Naive thymus-derived CD4-positive, alpha-beta T cell (primary cell): ENCODE measurements at regions of chr16 and their contacts with region 1.

Region 1: DNA sequence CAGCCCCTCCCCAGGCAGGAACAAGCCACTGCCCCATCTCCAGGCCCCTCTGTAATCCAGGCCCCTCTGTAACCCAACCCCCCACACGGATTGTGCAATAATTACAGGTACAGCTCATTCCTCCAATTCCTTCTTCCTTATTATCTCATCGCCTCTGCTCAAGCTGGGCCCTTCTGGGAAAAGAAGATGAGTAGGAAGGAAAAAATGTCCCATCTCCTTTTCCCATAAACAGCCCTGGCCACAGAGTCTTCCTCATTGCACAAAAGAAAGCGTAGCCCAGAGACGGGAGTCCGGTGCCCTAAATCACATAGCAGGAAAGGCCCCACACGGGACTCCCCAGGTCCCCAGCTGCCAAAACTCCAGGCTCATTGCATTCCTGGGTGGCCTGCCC is 3.6 kb upstream of the LITAFD start:
- DNase-seq: no peak
- ATAC-seq: no peak
- H3K4me3 ChIP-seq: no peak overlapping the region
- H3K4me3 Mint-ChIP-seq: no peak overlapping the region
- H3K27ac ChIP-seq: no peak overlapping the region
- H3K27ac Mint-ChIP-seq: no peak overlapping the region
- H3K4me1 ChIP-seq: no peaks in the 10 kb centered on the region
- H3K4me1 Mint-ChIP-seq: peaks cover 0 to 23% (median 11%) of the 10 kb centered on the region in 7 donors
- H3K27me3 ChIP-seq: no peaks in the 10 kb centered on the region
- H3K27me3 Mint-ChIP-seq: no peaks in the 10 kb centered on the region

Region 2: GRCh38 chr16:8589057-8589899 is 289.2 kb before region 1 on chr16:
- CTCF ChIA-PET with region 1: no interaction called
- POLR2A ChIA-PET with region 1: no interaction called
- intact Hi-C with region 1: no loop called
- DNase-seq: no peak
- ATAC-seq: no peak
- H3K4me3 ChIP-seq: no peak overlapping the region
- H3K4me3 Mint-ChIP-seq: peak overlapping the region in 3 of 10 donors; percentile 12 to 40 (median 19)
- H3K27ac ChIP-seq: no peak overlapping the region
- H3K27ac Mint-ChIP-seq: no peak overlapping the region
- H3K4me1 ChIP-seq: no peaks in the 10 kb centered on the region
- H3K4me1 Mint-ChIP-seq: peaks cover 0 to 7% (median 5%) of the 10 kb centered on the region in 7 donors
- H3K27me3 ChIP-seq: peaks cover 0 to 17% of the 10 kb centered on the region in 2 donors
- H3K27me3 Mint-ChIP-seq: peaks cover 34 to 49% (median 37%) of the 10 kb centered on the region in 5 donors

Region 3: DNA sequence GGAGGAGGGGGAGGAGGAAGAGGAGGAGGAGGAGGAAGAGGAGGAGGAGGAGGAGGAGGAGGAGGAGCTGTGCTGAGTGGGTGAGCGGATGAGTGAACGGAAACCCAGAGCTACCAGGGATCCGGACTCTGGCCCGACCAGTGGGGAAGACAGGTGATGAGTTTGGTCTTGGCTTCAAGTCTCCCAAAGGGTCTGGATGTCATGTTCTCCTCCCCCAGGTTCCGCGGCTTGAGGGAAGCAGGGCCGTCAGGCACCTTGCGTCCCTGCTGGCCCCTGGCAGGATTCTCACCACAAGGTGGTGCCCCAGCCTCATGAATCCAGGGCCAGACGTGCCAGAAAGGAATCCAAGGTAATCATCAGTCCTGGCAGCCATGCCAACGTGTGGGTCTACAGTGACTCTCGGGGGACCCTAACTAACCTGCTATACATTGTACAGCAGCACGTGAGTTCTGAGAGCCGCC is 217.6 kb before region 1 on chr16:
- CTCF ChIA-PET with region 1: interaction called, 16 read pairs
- POLR2A ChIA-PET with region 1: no interaction called
- intact Hi-C with region 1: loop called (anchors 1 kb)
- DNase-seq: peak in 8 of 9 donors; percentile 11 to 71 (median 28)
- ATAC-seq: peak; percentile 81
- H3K4me3 ChIP-seq: no peak overlapping the region
- H3K4me3 Mint-ChIP-seq: no peak overlapping the region
- H3K27ac ChIP-seq: no peak overlapping the region
- H3K27ac Mint-ChIP-seq: no peak overlapping the region
- H3K4me1 ChIP-seq: no peaks in the 10 kb centered on the region
- H3K4me1 Mint-ChIP-seq: peaks cover 0 to 3% (median 0%) of the 10 kb centered on the region in 7 donors
- H3K27me3 ChIP-seq: no peaks in the 10 kb centered on the region
- H3K27me3 Mint-ChIP-seq: no peaks in the 10 kb centered on the region

Region 4: DNA sequence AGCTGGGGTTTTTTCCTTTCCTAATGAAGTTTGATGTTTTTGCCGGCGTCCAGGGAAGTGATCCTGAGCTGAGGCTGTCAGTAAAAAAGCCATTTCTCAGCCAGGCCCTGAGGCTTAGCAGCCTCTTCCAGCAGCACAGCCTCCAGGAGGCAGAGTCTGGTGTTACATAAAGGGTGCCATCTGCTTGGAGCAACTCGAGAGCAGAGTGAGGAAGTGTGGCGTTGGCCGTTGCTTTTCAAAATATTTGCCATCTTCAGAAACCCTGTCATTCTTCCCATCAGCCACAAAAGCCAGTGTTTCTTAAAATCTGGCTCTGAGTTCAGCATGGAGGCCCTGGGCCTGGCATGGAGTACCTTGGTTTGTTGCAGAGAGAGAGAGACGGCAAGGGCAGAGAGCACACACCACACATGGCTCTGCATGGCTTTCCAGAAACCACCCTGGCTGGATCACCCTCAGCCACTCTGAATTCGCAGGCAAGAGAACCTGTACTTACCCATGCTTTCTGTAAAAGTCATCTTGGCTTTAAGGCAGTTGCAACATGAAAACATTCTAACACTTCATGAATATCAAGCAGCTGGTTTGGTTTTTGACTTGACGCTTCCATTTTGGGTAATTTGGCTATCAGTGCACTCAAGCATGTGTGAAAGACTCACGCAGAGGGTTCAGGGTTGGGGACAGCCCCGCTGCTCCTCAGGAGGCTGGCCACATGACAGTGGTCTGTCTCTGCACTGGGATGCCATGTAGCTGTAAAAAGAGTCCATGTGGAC is 59.8 kb before region 1 on chr16:
- CTCF ChIA-PET with region 1: interaction called, 3 read pairs
- POLR2A ChIA-PET with region 1: no interaction called
- intact Hi-C with region 1: loop called in 1 of 2 experiments (anchors 2 kb)
- DNase-seq: no peak
- ATAC-seq: no peak
- H3K4me3 ChIP-seq: no peak overlapping the region
- H3K4me3 Mint-ChIP-seq: peak overlapping the region in 1 of 10 donors; percentile 32
- H3K27ac ChIP-seq: no peak overlapping the region
- H3K27ac Mint-ChIP-seq: peak overlapping the region in 2 of 9 donors; percentile 53 to 81
- H3K4me1 ChIP-seq: peaks cover 0 to 5% of the 10 kb centered on the region in 2 donors
- H3K4me1 Mint-ChIP-seq: peaks cover 16 to 29% (median 23%) of the 10 kb centered on the region in 7 donors
- H3K27me3 ChIP-seq: no peaks in the 10 kb centered on the region
- H3K27me3 Mint-ChIP-seq: no peaks in the 10 kb centered on the region

Region 5: DNA sequence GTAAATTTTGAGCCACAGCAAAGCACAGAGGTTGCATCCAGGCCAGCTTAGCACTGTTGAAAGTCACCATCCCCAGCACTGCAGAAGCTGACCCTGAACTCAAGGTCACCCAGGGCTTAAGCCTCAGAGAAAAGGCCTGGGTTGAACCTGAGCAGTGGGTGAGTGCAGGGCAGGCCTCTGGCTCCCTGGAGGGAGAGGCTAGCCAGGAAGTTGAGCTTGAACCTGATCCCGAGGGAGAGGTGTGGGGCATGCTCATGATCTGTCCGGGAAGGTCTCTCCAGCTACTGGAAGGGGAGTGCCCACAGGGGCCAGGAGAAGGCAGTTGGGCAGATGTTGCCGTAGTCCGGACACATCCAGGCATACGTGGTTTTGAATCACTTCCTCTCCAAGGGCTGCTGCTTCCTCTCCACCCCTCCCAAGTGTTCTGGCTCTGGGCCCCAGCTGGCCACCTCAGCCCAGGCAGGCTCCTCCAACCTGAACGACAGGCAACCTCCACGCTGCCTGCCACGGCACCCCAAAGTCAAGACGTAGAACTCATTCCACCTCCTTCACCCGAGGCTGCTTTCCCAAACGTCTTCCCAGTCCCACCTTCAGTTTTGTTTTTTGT is 28.1 kb before region 1 on chr16:
- CTCF ChIA-PET with region 1: interaction called, 4 read pairs
- POLR2A ChIA-PET with region 1: no interaction called
- intact Hi-C with region 1: loop called in 1 of 2 experiments (anchors 2 kb)
- DNase-seq: no peak
- ATAC-seq: peak; percentile 78
- H3K4me3 ChIP-seq: no peak overlapping the region
- H3K4me3 Mint-ChIP-seq: peak overlapping the region in 3 of 10 donors; percentile 14 to 42 (median 41)
- H3K27ac ChIP-seq: peak overlapping the region; percentile 51
- H3K27ac Mint-ChIP-seq: peak overlapping the region; percentile 27 to 86 (median 72)
- H3K4me1 ChIP-seq: no peaks in the 10 kb centered on the region
- H3K4me1 Mint-ChIP-seq: peaks cover 10 to 29% (median 17%) of the 10 kb centered on the region in 7 donors
- H3K27me3 ChIP-seq: no peaks in the 10 kb centered on the region
- H3K27me3 Mint-ChIP-seq: no peaks in the 10 kb centered on the region